ENCODE measurements at regions of chr1 and their contacts with region 1.

Region 1: DNA sequence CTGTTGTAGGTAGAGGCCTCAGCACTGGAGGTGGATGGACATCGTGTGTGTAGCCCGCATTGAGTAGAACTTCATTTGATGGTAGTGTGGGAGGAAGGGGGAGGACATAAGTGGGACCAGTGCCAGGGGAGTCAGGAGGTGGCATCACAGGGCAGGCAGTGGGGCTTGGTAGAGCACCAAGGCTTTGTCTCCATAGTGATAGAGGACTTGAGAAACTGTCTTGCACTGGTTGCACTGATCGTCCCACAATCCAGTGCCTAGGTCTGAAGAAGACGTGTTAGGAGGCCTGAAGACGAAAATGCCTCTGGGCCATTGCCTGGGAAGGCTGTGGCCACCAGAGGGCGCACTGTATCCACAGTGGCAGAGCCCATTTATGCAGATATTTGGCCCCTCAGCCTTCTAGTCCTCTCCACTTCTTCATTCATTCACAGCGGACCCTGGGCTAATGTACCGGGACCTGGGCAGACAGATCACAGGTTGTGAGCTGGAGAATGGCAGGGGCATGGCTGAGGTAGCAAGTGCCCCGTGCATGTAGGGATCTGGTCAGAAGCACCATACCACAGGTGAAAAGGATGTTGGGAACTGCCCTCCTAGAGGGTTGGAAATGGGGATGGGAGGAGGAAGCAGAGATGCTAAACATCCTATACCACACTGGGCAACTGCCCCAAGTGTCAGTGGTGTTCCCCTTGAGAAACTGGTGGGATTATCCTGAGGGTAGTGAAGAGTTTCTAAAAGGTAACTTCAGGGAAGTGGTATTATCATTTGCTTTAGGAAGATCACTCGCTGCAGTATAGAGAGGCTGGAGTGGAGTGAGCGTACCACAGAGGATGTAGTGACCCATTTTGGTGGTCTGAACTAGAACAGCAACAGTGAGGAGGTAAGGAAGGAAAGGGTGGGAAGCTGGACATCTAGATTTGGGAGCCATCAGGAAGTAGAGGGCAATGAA is 95.3 kb downstream of the PIK3R3 start:
- DNase-seq: peak; percentile 91
- ATAC-seq: peak; percentile 89
- H3K4me3 Mint-ChIP-seq: no peak overlapping the region
- H3K27ac Mint-ChIP-seq: no peak overlapping the region
- H3K4me1 Mint-ChIP-seq: no peaks in the 10 kb centered on the region
- H3K27me3 Mint-ChIP-seq: no peaks in the 10 kb centered on the region
- CTCF ChIP-seq: peak; percentile 95

Region 2: GRCh38 chr1:46008585-46008984 is 28.6 kb before region 1 on chr1:
- CTCF ChIA-PET with region 1: no interaction called
- POLR2A ChIA-PET with region 1: no interaction called
- intact Hi-C with region 1: no loop called
- DNase-seq: no peak
- ATAC-seq: no peak
- H3K4me3 Mint-ChIP-seq: no peak overlapping the region
- H3K27ac Mint-ChIP-seq: no peak overlapping the region
- H3K4me1 Mint-ChIP-seq: no peaks in the 10 kb centered on the region
- H3K27me3 Mint-ChIP-seq: no peaks in the 10 kb centered on the region
- CTCF ChIP-seq: no peak

Region 3: GRCh38 chr1:46021046-46021996 is 15.8 kb before region 1 on chr1:
- CTCF ChIA-PET with region 1: interaction called, 11 read pairs
- POLR2A ChIA-PET with region 1: no interaction called
- intact Hi-C with region 1: no loop called
- DNase-seq: no peak
- ATAC-seq: no peak
- H3K4me3 Mint-ChIP-seq: no peak overlapping the region
- H3K27ac Mint-ChIP-seq: no peak overlapping the region
- H3K4me1 Mint-ChIP-seq: no peaks in the 10 kb centered on the region
- H3K27me3 Mint-ChIP-seq: no peaks in the 10 kb centered on the region
- CTCF ChIP-seq: no peak

Region 4: DNA sequence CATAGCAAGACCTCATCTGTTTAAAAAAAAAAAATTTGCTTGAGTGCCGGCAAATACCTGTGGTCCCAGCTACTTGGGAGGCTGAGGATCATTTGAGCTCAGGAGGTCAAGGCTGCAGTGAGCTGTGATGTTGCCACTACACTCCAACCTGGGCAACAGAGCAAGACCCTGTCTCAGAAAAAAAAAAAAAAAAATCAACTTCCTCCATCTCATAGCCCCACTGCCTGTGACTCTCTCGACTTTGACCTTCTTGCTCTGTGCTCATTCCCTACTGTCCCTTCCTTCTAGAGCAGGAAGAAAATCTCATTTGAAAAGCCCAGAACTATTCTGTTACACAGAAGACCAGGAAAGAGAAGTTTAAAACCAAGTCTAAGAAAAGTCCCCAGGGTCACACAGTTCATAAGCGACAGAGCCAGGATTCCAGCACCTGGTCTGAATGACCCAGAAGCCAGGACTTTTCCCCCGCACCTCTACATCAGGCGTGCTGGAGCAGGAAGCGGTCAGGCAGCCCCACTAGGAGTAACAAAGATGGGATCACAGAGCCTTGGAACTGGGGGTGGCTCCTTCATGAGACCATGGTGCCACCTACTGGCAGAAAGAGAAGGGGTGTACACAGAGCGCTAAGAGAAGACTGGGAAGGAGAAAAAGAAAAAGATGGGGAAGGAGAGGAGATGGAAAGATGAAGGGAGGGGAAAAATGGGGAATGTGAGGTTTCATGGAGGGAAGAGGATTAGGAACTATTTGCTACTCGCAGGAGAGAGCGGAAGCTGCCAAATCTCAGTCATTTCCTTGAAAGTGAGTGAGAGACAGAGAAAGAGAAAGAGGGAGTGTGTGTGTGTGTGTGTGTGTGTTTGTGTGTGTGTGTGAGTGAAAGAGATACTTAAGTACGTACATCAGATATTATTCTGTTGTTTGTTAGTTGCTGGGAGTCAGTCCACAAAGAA is 142.2 kb after region 1 on chr1:
- CTCF ChIA-PET with region 1: interaction called, 55 read pairs
- POLR2A ChIA-PET with region 1: interaction called, 4 read pairs
- intact Hi-C with region 1: loop called (anchors 1 kb)
- DNase-seq: peak; percentile 79
- ATAC-seq: peak; percentile 77
- H3K4me3 Mint-ChIP-seq: no peak overlapping the region
- H3K27ac Mint-ChIP-seq: no peak overlapping the region
- H3K4me1 Mint-ChIP-seq: peaks cover 7% of the 10 kb centered on the region
- H3K27me3 Mint-ChIP-seq: no peaks in the 10 kb centered on the region
- CTCF ChIP-seq: peak; percentile 95